ENCODE measurements at regions of chr13 and their contacts with region 1.

Region 1: DNA sequence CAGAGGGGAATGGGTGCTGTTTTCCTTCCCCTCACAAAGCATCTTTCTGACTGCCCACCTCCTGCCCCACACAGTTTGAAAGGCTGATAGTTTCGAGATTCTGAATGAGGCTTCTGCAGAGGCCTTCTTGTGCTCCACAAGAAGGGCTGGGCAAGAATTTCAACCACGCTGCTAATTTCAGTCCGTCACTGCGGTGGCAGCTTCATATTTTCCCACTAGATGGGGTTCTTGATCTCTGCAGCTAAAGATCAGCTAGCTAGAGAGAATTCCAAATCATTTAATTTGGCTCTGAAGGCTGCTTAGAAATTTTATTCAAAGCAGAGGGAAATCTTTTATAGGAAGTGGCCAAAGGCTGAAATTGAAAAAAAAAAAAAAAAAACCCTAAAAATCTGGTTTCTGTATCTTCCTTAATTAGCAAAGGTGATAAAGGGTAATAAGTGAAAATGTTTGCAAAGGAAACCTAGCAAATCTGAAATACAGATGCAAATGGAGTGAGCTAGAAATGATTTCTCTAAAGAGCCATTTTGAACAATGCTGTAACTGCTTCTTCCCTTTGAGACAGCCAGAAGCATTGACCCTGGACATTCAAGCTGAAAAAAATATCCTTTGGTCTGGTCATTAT is 38.0 kb upstream of the C13orf42 start:
- DNase-seq: peak; percentile 8
- H3K4me3 ChIP-seq: no peak overlapping the region
- H3K27ac ChIP-seq: no peak overlapping the region
- H3K27me3 ChIP-seq: peaks cover 9% of the 10 kb centered on the region
- CTCF ChIP-seq: peak; percentile 68

Region 2: DNA sequence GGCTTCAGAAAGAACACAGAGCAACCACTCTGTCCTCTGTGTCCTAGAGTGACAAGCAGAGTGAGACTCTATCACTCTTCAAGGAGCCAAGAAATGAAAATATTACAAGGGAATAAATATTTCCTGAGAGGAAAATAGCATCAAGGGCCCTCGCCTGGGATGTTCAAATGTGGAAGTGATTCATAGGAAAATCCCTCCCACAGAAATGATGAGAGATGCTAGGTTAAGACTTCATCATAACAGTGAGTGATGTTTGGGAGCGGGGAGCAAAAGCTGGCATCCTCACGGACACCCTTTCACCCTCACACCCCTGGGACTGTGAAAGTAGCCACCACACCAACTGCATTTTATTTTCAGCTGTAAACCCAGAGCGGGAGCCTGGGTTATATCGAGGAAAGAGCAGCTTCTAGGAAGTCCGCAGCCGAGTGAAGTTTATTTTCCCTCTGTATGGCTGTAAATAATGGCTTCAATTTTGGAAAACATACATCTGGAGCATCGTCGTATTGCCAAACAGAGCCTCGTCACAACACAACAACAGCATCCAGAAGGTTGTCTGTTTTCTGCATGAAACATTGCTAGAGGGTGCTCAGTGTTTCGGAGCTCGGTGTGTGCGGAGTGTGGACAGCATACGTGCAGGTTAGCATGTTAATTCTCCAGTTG is 360.4 kb before region 1 on chr13:
- CTCF ChIA-PET with region 1: no interaction called
- POLR2A ChIA-PET with region 1: no interaction called
- DNase-seq: no peak
- H3K4me3 ChIP-seq: peak overlapping the region; percentile 20; the same call in 1 of the 2 replicates
- H3K27ac ChIP-seq: no peak overlapping the region
- H3K27me3 ChIP-seq: peaks cover 3% of the 10 kb centered on the region
- CTCF ChIP-seq: no peak

Region 3: DNA sequence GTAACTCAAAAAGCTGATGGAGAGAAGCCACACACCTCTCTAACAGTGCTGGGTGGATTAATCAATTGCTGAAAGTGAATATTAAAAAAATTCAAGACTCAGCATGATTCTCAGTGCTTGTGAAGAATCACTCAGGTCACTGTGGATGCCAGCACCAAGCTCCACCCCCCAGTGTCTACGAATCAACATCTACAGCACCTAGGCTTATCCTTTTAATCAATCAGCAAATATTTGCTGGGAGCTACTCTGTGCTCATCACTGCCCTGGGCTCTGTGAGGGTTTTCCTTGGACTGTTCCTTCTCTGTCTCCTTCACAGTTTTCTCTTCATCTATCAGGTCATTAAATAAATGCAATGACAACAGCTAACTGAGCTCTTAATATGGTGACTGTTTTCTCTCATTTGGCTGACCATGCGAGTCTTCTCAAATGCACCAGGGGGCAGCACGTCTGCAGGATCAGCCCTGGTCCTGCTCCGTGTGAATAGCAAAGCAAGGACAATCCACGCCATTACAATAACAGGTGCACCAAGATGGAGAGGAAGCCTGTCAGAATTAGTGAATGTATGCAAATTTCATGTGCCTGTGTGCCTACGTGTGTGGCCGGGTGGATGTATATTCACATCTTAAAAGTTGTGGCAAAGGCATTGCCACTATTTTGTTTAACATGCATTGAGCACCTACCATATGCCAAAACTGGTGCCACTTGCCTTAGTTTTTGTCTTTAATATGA is 23.4 kb before region 1 on chr13:
- CTCF ChIA-PET with region 1: interaction called, 10 read pairs
- POLR2A ChIA-PET with region 1: no interaction called
- DNase-seq: peak; percentile 26
- H3K4me3 ChIP-seq: no peak overlapping the region
- H3K27ac ChIP-seq: no peak overlapping the region
- H3K27me3 ChIP-seq: peaks cover 7% of the 10 kb centered on the region
- CTCF ChIP-seq: peak; percentile 79